Transverse colon (tissue), 4 donors: ENCODE measurements at regions of chr6 and their contacts with region 1.

Region 1: DNA sequence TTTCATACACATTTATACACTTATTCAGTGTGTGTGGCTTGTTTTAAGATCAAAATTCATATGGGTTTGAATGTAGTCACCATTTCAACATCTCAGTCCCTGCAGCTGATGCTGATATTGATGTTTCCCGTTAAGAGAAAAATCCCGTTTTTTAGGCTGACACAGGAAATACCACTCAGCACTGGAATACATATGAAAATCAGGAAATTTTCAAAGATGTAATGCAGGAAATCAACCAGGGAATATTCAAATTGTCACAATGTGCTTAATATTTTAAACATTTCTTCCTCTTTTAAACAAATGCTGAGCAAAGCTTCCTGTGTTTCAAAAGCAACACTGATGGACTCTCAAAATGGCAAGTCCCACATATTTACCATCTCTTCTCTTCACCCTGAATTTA is 94.5 kb upstream of the MARCKS start:
- DNase-seq: no peak
- H3K4me3 ChIP-seq: no peak overlapping the region
- H3K27ac ChIP-seq: no peak overlapping the region
- H3K4me1 ChIP-seq: no peaks in the 10 kb centered on the region
- H3K27me3 ChIP-seq: no peaks in the 10 kb centered on the region
- CTCF ChIP-seq: no peak
- EP300 ChIP-seq: no peak
- POLR2A ChIP-seq: no peak

Region 2: GRCh38 chr6:113744861-113745260 is 17.8 kb before region 1 on chr6:
- in situ Hi-C with region 1: no loop called
- intact Hi-C with region 1: loop called (anchors 1 kb)
- DNase-seq: no peak
- H3K4me3 ChIP-seq: no peak overlapping the region
- H3K27ac ChIP-seq: no peak overlapping the region
- H3K4me1 ChIP-seq: peaks cover 0 to 9% (median 1%) of the 10 kb centered on the region in 4 donors
- H3K27me3 ChIP-seq: no peaks in the 10 kb centered on the region
- CTCF ChIP-seq: no peak
- EP300 ChIP-seq: no peak
- POLR2A ChIP-seq: no peak

Region 3: GRCh38 chr6:114049367-114049997 is 286.8 kb after region 1 on chr6:
- in situ Hi-C with region 1: no loop called
- intact Hi-C with region 1: no loop called
- DNase-seq: no peak
- H3K4me3 ChIP-seq: no peak overlapping the region
- H3K27ac ChIP-seq: no peak overlapping the region
- H3K4me1 ChIP-seq: no peaks in the 10 kb centered on the region
- H3K27me3 ChIP-seq: no peaks in the 10 kb centered on the region
- CTCF ChIP-seq: no peak
- EP300 ChIP-seq: no peak
- POLR2A ChIP-seq: no peak